Activated CD8-positive, alpha-beta T cell treated with anti-CD3 and anti-CD28 coated beads, Interleukin-2, amount 10 ng/mL, durations not matched to agents 7 days and 5 days (primary cell): ENCODE measurements at regions of chrX and their contacts with region 1.

Region 1: GRCh38 chrX:12814420-12814819 is 23.2 kb downstream of the PRPS2 start:
- DNase-seq: peak; percentile 68
- ATAC-seq: peak; percentile 47
- H3K4me3 Mint-ChIP-seq: no peak overlapping the region
- H3K27ac Mint-ChIP-seq: no peak overlapping the region
- H3K4me1 Mint-ChIP-seq: peaks cover 34% of the 10 kb centered on the region
- H3K27me3 Mint-ChIP-seq: no peaks in the 10 kb centered on the region

Region 2: GRCh38 chrX:12894074-12895030 is 79.9 kb after region 1 on chrX:
- CTCF ChIA-PET with region 1: interaction called, 90 read pairs
- POLR2A ChIA-PET with region 1: no interaction called
- DNase-seq: peak; percentile 61
- ATAC-seq: peak; percentile 70
- H3K4me3 Mint-ChIP-seq: no peak overlapping the region
- H3K27ac Mint-ChIP-seq: no peak overlapping the region
- H3K4me1 Mint-ChIP-seq: peaks cover 43% of the 10 kb centered on the region
- H3K27me3 Mint-ChIP-seq: peaks cover 4% of the 10 kb centered on the region

Region 3: GRCh38 chrX:12901486-12901885 is 87.1 kb after region 1 on chrX:
- CTCF ChIA-PET with region 1: interaction called, 62 read pairs
- POLR2A ChIA-PET with region 1: no interaction called
- DNase-seq: peak; percentile 77
- ATAC-seq: peak; percentile 47
- H3K4me3 Mint-ChIP-seq: no peak overlapping the region
- H3K27ac Mint-ChIP-seq: no peak overlapping the region
- H3K4me1 Mint-ChIP-seq: peaks cover 2% of the 10 kb centered on the region
- H3K27me3 Mint-ChIP-seq: peaks cover 5% of the 10 kb centered on the region